WTC11 (cell line): ENCODE measurements at regions of chr10 and their contacts with region 1.

Region 1: GRCh38 chr10:9807846-9808245 is 1209.8 kb upstream of the CELF2 start:
- DNase-seq: no peak
- ATAC-seq: no peak
- H3K4me3 Mint-ChIP-seq: no peak overlapping the region
- H3K27ac Mint-ChIP-seq: no peak overlapping the region
- H3K4me1 Mint-ChIP-seq: no peaks in the 10 kb centered on the region
- H3K27me3 Mint-ChIP-seq: no peaks in the 10 kb centered on the region
- CTCF ChIP-seq: no peak

Region 2: DNA sequence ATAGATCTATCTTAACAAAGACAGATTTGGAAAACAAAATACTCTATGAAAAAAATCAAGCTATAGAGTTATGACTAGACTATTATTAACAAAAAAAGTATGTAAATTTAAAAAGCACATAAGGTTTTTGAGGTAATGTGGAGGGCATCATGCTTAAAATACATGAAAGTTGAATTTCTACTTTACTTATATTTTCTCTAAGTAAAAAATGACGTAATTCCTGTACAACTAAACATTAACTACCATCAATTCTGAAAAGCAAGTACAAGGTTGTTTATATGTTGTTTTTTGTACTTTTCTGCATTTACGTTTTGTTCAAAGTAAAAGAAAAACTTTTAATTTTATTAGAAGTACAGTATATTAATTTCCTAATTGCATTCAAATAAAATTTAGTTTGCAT is 89.1 kb before region 1 on chr10:
- CTCF ChIA-PET with region 1: no interaction called
- POLR2A ChIA-PET with region 1: no interaction called
- DNase-seq: no peak
- ATAC-seq: no peak
- H3K4me3 Mint-ChIP-seq: no peak overlapping the region
- H3K27ac Mint-ChIP-seq: no peak overlapping the region
- H3K4me1 Mint-ChIP-seq: no peaks in the 10 kb centered on the region
- H3K27me3 Mint-ChIP-seq: no peaks in the 10 kb centered on the region
- CTCF ChIP-seq: no peak

Region 3: DNA sequence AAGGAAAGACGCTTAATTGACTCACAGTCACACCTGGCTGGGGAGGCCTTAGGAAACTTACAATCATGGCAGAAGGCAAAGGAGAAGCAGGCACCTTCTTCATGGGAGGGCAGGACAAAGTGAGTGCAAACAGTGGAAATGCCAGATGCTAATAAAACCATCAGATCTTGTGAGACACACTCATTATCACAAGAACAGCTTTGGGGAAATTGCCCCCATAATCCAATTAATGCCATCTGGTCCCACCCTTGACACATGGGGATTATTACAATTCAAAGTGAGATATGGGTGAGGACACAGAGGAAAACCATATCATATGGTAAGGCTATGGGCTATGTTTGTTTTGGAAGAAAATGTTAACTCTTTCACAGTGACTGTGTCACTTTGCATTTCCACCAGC is 62.7 kb before region 1 on chr10:
- CTCF ChIA-PET with region 1: no interaction called
- POLR2A ChIA-PET with region 1: interaction called, 12 read pairs
- DNase-seq: no peak
- ATAC-seq: no peak
- H3K4me3 Mint-ChIP-seq: no peak overlapping the region
- H3K27ac Mint-ChIP-seq: no peak overlapping the region
- H3K4me1 Mint-ChIP-seq: peaks cover 4% of the 10 kb centered on the region
- H3K27me3 Mint-ChIP-seq: no peaks in the 10 kb centered on the region
- CTCF ChIP-seq: no peak

Region 4: GRCh38 chr10:9911488-9911887 is 103.6 kb after region 1 on chr10:
- CTCF ChIA-PET with region 1: no interaction called
- POLR2A ChIA-PET with region 1: no interaction called
- DNase-seq: peak; percentile 62
- ATAC-seq: peak; percentile 98
- H3K4me3 Mint-ChIP-seq: no peak overlapping the region
- H3K27ac Mint-ChIP-seq: peak overlapping the region; percentile 93
- H3K4me1 Mint-ChIP-seq: peaks cover 32% of the 10 kb centered on the region
- H3K27me3 Mint-ChIP-seq: no peaks in the 10 kb centered on the region; the same call in 1 of the 2 replicates
- CTCF ChIP-seq: no peak

Region 5: DNA sequence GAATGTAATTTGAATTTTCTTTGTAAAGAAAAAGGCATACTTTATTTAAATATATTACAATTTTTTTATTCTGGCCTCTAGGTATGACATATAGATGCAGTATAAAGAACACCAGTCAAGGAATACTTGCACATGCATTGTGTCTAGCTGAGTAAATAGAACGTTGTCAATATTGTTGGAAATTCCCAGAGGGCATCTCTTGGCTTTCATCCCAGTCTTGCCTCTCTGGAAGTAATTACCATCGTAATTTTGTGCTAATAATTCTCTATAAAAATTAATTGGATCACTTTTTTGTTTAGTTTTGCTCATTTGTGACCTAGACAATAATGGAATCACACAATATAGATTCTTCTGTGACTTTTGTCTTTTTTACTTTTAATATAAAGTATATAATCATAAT is 157.5 kb after region 1 on chr10:
- CTCF ChIA-PET with region 1: no interaction called
- POLR2A ChIA-PET with region 1: no interaction called
- DNase-seq: no peak
- ATAC-seq: no peak
- H3K4me3 Mint-ChIP-seq: no peak overlapping the region
- H3K27ac Mint-ChIP-seq: no peak overlapping the region
- H3K4me1 Mint-ChIP-seq: no peaks in the 10 kb centered on the region
- H3K27me3 Mint-ChIP-seq: no peaks in the 10 kb centered on the region
- CTCF ChIP-seq: no peak